Esophagus muscularis mucosa (tissue), 4 donors: ENCODE measurements at regions of chr20 and their contacts with region 1.

Region 1: DNA sequence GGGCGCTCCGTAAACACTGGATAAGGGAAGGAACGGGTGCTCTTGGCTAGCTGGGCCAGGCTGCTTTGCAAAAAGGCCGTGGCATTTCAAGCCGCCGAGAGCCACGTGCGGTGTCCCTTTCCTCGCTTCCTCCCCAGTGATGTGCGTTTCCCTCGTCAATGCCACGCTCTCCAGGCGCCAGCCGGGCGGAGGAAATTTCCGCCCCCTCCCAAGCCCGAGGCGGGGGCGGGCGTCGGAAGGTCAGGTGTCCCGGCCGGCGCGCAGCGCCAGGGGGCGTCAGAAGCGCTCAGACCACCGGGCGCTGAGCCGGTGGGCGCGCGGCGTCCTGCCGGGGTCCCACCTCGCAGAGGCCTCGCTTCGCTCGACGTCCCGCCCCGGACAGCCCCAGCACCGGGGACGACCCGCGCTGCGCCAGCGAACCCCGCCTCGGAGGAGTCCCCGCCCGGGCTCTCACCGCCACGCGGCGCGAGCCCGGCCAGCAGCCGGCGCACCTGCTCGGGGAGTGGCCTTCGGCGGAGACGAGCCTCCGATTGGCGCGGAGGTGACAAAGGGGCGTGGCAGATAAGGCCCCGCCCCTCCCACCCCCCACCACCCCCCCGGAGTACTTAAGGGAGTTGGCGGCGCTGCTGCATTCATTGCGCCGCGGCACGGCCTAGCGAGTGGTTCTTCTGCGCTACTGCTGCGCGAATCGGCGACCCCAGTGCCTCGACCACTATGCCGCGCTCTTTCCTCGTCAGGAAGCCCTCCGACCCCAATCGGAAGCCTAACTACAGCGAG is at the start of gene SNAI1:
- DNase-seq: peak; percentile 94
- H3K4me3 ChIP-seq: peak within 1 kb of the TSS; percentile 53 to 65 (median 56)
- H3K27ac ChIP-seq: peak within 1 kb of the TSS; percentile 53 to 75 (median 69)
- H3K4me1 ChIP-seq: peaks cover 25 to 68% (median 64%) of the 10 kb centered on the region in 4 donors
- H3K27me3 ChIP-seq: no peaks in the 10 kb centered on the region
- CTCF ChIP-seq: peak; percentile 44 to 56 (median 52)
- EP300 ChIP-seq: no peak
- POLR2A ChIP-seq: peak; percentile 64
- total RNA-seq, gene SNAI1: 0.83 to 5.3 (median 3.0) TPM

Region 2: GRCh38 chr20:50012282-50013263 is 30.0 kb after region 1 on chr20:
- intact Hi-C with region 1: no loop called
- DNase-seq: no peak
- H3K4me3 ChIP-seq: no peak overlapping the region
- H3K27ac ChIP-seq: no peak overlapping the region
- H3K4me1 ChIP-seq: peaks cover 0 to 15% (median 10%) of the 10 kb centered on the region in 4 donors
- H3K27me3 ChIP-seq: peaks cover 0 to 33% (median 0%) of the 10 kb centered on the region in 4 donors
- CTCF ChIP-seq: no peak
- EP300 ChIP-seq: no peak
- POLR2A ChIP-seq: no peak

Region 3: DNA sequence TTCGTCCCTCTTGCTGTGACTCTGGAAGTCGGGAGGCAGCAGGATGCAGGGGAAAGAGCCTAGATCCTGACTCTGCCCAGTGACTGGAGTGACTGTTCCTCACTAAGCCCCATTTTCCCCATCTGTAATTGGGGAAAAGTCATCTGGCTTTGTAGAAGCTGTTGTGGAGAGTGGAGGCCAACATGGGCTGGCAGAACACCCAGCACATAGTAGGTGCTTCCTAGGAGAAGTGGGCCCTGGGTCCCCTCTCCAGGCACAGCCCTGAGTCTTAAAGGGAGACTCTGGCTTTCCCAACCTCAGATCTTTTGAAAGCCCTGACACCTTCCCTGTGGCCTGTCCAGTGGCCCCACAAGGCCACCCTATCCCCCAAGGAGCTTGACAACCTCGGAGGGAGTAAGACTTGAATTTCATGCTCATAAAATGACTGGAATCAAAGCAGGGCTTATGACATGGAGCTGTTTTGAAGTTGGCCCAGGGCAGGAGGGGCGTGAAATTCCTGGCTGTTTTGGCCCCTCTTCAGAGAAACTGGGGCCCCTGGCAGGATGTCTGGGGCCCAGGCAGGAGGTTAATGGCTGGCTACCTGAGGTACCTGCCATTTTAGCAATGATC is 78.7 kb after region 1 on chr20:
- intact Hi-C with region 1: no loop called
- DNase-seq: no peak
- H3K4me3 ChIP-seq: no peak overlapping the region
- H3K27ac ChIP-seq: no peak overlapping the region
- H3K4me1 ChIP-seq: no peaks in the 10 kb centered on the region
- H3K27me3 ChIP-seq: no peaks in the 10 kb centered on the region
- CTCF ChIP-seq: no peak
- EP300 ChIP-seq: no peak
- POLR2A ChIP-seq: no peak

Region 4: DNA sequence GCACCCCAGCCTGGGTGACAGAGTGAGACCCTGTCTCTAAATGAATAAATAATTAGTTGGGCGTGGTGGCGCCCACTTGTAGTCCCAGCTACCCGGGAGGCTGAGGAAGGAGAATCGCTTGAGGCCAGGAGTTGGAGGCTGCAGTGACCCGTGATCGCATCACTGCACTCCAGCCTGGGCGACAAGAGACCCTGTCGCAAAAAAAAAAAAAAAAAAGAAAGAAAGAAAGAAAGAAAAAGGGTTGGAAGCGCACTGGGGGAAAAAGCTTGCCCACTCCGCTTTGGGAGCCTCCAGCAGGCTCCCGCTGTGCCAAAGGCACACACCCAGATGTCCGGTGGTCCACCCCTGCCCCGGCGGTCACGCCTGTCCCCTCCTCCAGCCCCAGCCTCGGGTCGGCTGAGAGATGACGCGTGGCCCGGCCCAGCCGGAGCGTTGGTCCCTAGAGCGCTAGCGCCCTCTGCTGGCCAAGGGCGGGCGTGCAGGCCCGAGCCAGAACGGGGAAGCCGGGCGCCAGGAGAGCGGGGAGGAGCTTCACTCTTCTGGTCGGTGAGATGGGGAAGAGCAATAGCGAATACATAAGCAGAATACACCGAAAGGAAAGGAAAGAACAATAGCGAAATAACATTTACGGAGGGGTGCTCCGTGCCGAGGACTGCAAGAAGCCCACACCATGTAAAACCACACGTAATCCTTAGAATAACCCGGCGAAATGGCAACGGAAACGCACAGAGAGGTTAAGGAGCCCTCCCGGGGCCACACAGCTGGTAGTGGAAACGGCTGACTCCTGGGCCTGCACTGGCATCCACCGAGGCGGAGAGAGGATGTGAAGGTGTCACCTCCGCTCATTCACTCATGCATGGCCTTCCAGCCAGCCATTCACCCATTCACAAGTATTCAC is 88.7 kb after region 1 on chr20:
- intact Hi-C with region 1: loop called (anchors 1 kb)
- DNase-seq: peak; percentile 98
- H3K4me3 ChIP-seq: peak overlapping the region; percentile 39 to 54 (median 45)
- H3K27ac ChIP-seq: no peak overlapping the region
- H3K4me1 ChIP-seq: peaks cover 15 to 29% (median 27%) of the 10 kb centered on the region in 4 donors
- H3K27me3 ChIP-seq: no peaks in the 10 kb centered on the region
- CTCF ChIP-seq: peak in 2 of 3 experiments; percentile 100
- EP300 ChIP-seq: no peak
- POLR2A ChIP-seq: no peak

Region 5: DNA sequence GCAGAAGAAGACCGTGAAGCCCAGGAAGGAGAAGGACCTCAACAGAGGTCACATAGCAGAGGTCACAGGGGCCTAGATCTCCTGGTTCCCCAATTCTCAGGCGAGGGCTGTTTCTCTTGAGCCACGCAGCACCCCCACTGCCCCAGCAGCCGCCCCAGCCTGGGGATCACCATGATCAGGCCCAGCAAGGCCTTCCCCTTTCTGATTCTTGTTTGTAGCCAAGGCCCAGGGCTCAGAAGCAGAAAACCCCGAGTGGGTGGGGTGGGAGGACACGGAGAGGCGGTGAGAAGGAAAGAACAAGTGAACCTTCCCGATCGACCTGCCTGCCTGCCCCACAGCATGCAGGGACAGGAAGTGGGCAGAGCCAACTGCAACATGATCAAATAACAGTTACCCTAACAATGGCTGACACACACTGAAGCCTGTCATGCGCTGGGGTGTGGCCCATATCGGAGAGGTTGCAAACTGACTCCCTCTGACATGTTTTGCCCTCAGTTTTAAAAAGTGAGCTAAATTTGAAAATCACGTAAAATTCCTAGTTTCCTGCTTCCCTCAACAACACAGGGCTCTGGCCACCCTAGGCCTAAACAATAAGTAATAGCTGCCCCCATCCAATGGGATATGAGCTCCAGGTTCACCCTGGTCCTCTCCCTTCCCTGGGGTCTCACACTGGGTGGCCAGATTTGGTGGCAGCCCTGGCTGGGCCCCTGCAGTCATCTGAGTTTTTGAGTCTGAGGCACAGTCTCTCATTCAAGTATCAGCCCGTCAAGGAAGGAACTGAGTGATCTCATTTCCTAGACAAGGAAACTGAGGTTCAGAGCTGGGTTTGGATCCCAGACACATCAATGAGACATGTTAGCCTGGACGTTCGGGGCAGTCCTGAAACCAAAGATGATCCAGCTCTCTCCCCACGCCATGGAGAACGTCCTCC is 164.5 kb after region 1 on chr20:
- intact Hi-C with region 1: no loop called
- DNase-seq: no peak
- H3K4me3 ChIP-seq: no peak overlapping the region
- H3K27ac ChIP-seq: peak overlapping the region; percentile 43 to 66 (median 66)
- H3K4me1 ChIP-seq: peaks cover 67 to 100% (median 94%) of the 10 kb centered on the region in 4 donors
- H3K27me3 ChIP-seq: no peaks in the 10 kb centered on the region
- CTCF ChIP-seq: no peak
- EP300 ChIP-seq: no peak
- POLR2A ChIP-seq: no peak